ENCODE measurements at regions of chr7 and their contacts with region 1.

Region 1: DNA sequence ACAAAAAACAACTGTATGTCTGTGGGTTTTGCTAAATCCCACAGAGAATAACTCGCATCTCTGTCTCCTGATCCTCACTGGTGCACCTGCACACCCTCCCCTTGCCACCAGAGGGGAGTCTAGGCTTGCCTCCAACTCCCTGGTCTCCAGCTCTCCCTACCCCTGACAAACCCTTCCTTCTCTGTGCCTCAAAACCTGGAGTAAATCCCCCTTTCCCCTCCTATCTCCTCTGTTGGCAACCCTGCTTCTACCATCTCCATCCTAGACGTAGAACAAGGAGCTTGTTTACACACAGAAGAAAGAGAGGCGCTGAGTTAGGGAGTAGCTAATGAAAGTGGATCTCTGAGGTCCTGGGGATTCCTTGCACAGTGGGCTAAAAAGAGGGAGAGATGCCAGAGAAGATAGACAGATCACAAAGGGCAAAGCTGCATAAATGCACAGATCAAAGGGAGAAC is 6.0 kb downstream of the MBLAC1 start:
- DNase-seq: peak; percentile 50
- ATAC-seq: peak; percentile 89
- H3K4me3 Mint-ChIP-seq: no peak overlapping the region
- H3K27ac Mint-ChIP-seq: no peak overlapping the region
- H3K4me1 Mint-ChIP-seq: peaks cover 18% of the 10 kb centered on the region
- H3K27me3 Mint-ChIP-seq: no peaks in the 10 kb centered on the region
- CTCF ChIP-seq: peak; percentile 92

Region 2: DNA sequence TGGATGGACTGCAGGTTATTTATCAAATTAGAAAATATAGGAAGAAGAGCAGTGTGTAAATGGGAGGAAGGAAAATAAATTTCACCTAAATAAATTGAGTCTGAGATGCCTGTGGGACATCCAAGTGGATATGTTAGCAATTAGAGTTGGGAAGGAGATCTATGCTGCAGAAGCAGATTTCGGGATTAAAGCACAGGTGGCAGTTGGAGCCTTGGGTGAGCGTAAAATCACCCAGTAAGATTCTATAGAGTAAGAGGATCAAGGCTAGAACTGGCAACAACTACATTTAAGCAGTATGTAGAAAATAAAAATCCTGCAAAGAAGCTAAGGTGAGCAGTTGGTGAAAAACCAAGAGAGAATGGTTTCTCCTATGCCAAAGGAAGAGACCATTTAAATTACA is 221.7 kb before region 1 on chr7:
- CTCF ChIA-PET with region 1: interaction called, 3 read pairs
- POLR2A ChIA-PET with region 1: no interaction called
- intact Hi-C with region 1: loop called (anchors 1 kb)
- DNase-seq: no peak
- ATAC-seq: no peak
- H3K4me3 Mint-ChIP-seq: no peak overlapping the region
- H3K27ac Mint-ChIP-seq: no peak overlapping the region
- H3K4me1 Mint-ChIP-seq: peaks cover 28% of the 10 kb centered on the region
- H3K27me3 Mint-ChIP-seq: no peaks in the 10 kb centered on the region
- CTCF ChIP-seq: no peak

Region 3: DNA sequence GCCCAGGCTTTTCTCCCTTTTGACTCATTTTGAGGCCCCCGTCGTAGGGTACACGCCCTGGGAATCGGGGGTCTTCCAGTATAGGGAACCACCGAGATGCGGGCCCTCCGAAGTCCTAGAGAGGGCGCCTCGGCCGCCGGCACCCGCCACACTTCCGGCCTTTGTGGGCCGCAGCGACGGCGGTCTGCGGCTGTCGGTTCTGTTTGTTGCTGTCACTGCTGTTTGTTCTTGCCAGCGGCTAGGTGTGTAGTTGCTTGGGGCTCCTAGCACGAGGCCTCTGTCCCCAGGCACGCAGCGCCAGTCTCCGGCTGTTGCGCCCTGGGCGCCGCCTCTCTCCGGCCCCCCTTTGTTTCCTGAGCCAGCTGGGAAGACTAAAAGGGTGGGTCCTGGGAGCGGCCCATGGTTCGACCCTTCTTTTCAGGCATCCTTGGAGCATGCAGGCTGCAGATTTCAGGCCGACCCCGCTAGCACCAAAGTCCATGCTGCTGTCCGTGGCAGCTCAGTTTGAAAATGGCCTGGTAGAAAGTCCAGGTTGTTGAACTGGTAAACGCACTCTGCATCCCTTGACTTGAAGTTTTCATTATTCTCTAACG is 135.1 kb before region 1 on chr7:
- CTCF ChIA-PET with region 1: interaction called, 4 read pairs
- POLR2A ChIA-PET with region 1: no interaction called
- intact Hi-C with region 1: loop called (anchors 1 kb)
- DNase-seq: peak; percentile 60
- ATAC-seq: peak; percentile 92
- H3K4me3 Mint-ChIP-seq: peak overlapping the region; percentile 80
- H3K27ac Mint-ChIP-seq: peak overlapping the region; percentile 85
- H3K4me1 Mint-ChIP-seq: peaks cover 12% of the 10 kb centered on the region
- H3K27me3 Mint-ChIP-seq: peaks cover 1% of the 10 kb centered on the region
- CTCF ChIP-seq: no peak

Region 4: DNA sequence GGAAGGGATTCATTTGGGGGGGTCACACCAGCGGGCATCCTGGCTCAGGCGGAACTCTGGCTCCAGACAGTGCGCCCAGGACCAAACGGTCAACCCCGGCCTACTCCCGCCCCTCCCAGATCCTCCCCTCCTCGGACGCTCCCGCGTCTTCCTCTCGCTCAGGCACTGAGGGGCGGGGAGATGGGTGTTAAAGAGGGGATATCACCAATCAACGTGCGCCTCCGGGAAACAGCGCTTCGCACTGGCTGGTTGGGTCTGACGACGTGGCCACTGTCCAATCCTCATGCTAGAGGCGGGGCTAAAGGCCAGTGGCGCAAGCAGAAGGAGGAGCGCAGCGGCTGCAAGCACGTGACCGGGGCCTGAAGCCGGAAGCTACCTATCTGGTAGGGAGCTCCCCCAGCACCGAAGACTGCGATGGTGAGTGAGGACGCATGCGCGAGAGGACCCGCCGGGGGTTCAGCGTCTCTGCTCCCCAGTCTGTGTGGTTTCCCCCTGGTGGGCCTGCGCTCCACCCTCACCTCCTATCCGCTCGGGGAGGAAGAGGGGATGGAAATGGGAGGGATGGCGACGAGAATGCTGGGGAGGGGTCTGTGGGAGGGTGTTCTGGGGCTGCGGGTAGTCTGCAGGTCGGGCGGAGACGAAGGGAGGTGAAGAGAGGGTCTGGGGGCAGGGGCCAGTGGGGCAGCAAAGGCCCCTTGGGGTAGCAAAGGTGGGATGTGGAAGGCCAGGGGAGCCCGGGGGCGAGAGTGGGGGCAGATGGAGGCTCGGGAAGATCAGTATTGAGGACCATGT is 16.0 kb after region 1 on chr7 and contains the start of gene LAMTOR4:
- CTCF ChIA-PET with region 1: interaction called, 5 read pairs
- POLR2A ChIA-PET with region 1: interaction called, 16 read pairs
- intact Hi-C with region 1: loop called (anchors 1 kb)
- DNase-seq: peak; percentile 86
- ATAC-seq: peak; percentile 98
- H3K4me3 Mint-ChIP-seq: peak within 1 kb of the TSS; percentile 100
- H3K27ac Mint-ChIP-seq: peak within 1 kb of the TSS; percentile 99
- H3K4me1 Mint-ChIP-seq: peaks cover 46% of the 10 kb centered on the region
- H3K27me3 Mint-ChIP-seq: no peaks in the 10 kb centered on the region
- CTCF ChIP-seq: no peak
- total RNA-seq, gene LAMTOR4: 151 and 161 TPM in 2 replicates

Region 5: DNA sequence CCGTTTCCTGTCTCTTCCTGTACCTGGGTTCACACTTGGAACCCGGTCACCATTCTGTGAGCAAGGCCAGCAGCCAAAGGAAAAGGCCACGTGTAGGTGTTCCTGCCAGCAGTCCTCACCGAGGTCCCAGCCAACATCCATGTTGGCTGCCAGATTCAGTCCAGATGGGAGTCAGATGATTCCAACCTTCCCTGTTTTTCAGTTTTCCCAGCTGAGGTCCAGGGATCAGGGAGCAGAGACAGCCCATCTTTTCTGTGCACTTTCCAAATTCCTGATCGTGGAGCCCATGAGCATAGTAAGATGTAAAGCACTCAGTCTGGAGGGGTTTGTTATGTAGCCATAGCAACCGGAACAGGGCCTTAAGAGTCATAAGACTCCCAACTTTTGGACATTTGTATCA is 83.2 kb after region 1 on chr7:
- CTCF ChIA-PET with region 1: interaction called, 34 read pairs
- POLR2A ChIA-PET with region 1: interaction called, 10 read pairs
- intact Hi-C with region 1: loop called (anchors 1 kb)
- DNase-seq: no peak
- ATAC-seq: no peak
- H3K4me3 Mint-ChIP-seq: no peak overlapping the region
- H3K27ac Mint-ChIP-seq: peak overlapping the region; percentile 81
- H3K4me1 Mint-ChIP-seq: peaks cover 89% of the 10 kb centered on the region
- H3K27me3 Mint-ChIP-seq: no peaks in the 10 kb centered on the region
- CTCF ChIP-seq: no peak

Region 6: GRCh38 chr7:100342765-100343164 is 210.0 kb after region 1 on chr7:
- CTCF ChIA-PET with region 1: interaction called, 15 read pairs
- POLR2A ChIA-PET with region 1: interaction called, 8 read pairs
- intact Hi-C with region 1: loop called (anchors 1 kb)
- DNase-seq: no peak
- ATAC-seq: no peak
- H3K4me3 Mint-ChIP-seq: no peak overlapping the region
- H3K27ac Mint-ChIP-seq: peak overlapping the region; percentile 76
- H3K4me1 Mint-ChIP-seq: peaks cover 43% of the 10 kb centered on the region
- H3K27me3 Mint-ChIP-seq: no peaks in the 10 kb centered on the region
- CTCF ChIP-seq: no peak

Region 7: GRCh38 chr7:100407285-100408180 is 274.8 kb after region 1 on chr7:
- CTCF ChIA-PET with region 1: interaction called, 45 read pairs
- POLR2A ChIA-PET with region 1: interaction called, 5 read pairs
- intact Hi-C with region 1: loop called (anchors 1 kb)
- DNase-seq: no peak
- ATAC-seq: peak; percentile 96
- H3K4me3 Mint-ChIP-seq: no peak overlapping the region
- H3K27ac Mint-ChIP-seq: no peak overlapping the region
- H3K4me1 Mint-ChIP-seq: peaks cover 7% of the 10 kb centered on the region
- H3K27me3 Mint-ChIP-seq: no peaks in the 10 kb centered on the region
- CTCF ChIP-seq: peak; percentile 54